Naive thymus-derived CD4-positive, alpha-beta T cell (primary cell): ENCODE measurements at regions of chr1 and their contacts with region 1.

Region 1: GRCh38 chr1:198699167-198700015 is 60.6 kb downstream of the PTPRC start:
- DNase-seq: peak; percentile 34 to 68 (median 64)
- ATAC-seq: peak; percentile 84
- H3K4me3 ChIP-seq: no peak overlapping the region
- H3K4me3 Mint-ChIP-seq: peak overlapping the region; percentile 13 to 68 (median 40)
- H3K27ac ChIP-seq: peak overlapping the region; percentile 46
- H3K27ac Mint-ChIP-seq: peak overlapping the region; percentile 50 to 93 (median 87)
- H3K4me1 ChIP-seq: peaks cover 42 to 52% of the 10 kb centered on the region in 2 donors
- H3K4me1 Mint-ChIP-seq: peaks cover 46 to 97% (median 88%) of the 10 kb centered on the region in 7 donors
- H3K27me3 ChIP-seq: no peaks in the 10 kb centered on the region
- H3K27me3 Mint-ChIP-seq: no peaks in the 10 kb centered on the region

Region 2: GRCh38 chr1:197521118-197521739 is 1178.2 kb before region 1 on chr1:
- CTCF ChIA-PET with region 1: no interaction called
- POLR2A ChIA-PET with region 1: no interaction called
- intact Hi-C with region 1: loop called in 1 of 2 experiments (anchors 10 kb)
- DNase-seq: peak in 7 of 9 donors; percentile 2 to 34 (median 24)
- ATAC-seq: no peak
- H3K4me3 ChIP-seq: no peak overlapping the region
- H3K4me3 Mint-ChIP-seq: no peak overlapping the region
- H3K27ac ChIP-seq: no peak overlapping the region
- H3K27ac Mint-ChIP-seq: no peak overlapping the region
- H3K4me1 ChIP-seq: no peaks in the 10 kb centered on the region
- H3K4me1 Mint-ChIP-seq: peaks cover 0 to 5% (median 0%) of the 10 kb centered on the region in 7 donors
- H3K27me3 ChIP-seq: no peaks in the 10 kb centered on the region
- H3K27me3 Mint-ChIP-seq: no peaks in the 10 kb centered on the region

Region 3: GRCh38 chr1:198500096-198500495 is 199.3 kb before region 1 on chr1:
- CTCF ChIA-PET with region 1: no interaction called
- POLR2A ChIA-PET with region 1: no interaction called
- intact Hi-C with region 1: no loop called
- DNase-seq: no peak
- ATAC-seq: no peak
- H3K4me3 ChIP-seq: no peak overlapping the region
- H3K4me3 Mint-ChIP-seq: no peak overlapping the region
- H3K27ac ChIP-seq: no peak overlapping the region
- H3K27ac Mint-ChIP-seq: peak overlapping the region in 2 of 9 donors; percentile 1 to 13
- H3K4me1 ChIP-seq: no peaks in the 10 kb centered on the region
- H3K4me1 Mint-ChIP-seq: peaks cover 0 to 10% (median 4%) of the 10 kb centered on the region in 7 donors
- H3K27me3 ChIP-seq: no peaks in the 10 kb centered on the region
- H3K27me3 Mint-ChIP-seq: no peaks in the 10 kb centered on the region

Region 4: DNA sequence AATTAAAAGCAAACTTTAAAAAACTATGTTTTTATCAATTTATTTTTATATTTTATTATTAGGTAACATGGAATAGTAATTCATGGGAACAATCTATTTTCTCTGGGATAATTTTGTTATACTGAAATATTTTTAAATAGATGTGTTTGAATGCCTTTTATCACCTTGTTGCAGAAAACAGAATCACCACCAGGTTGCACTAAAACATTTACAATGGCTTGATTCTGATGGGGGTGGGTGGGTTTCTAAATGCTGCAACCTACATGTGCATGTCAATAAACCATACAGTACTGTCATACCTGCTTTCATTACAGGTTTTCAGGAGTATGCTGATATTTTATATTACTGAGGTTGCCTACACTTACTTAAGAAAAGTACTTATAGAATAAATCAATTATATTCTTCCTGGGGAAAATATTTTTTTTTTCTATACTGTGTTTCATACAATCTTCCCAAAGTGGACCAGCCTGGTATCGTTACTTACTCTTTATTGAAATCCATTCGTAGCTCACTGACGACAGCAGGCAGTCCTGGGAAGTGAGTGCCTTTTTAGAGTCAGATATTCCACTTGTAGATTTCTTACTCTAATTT is 72.3 kb after region 1 on chr1:
- CTCF ChIA-PET with region 1: no interaction called
- POLR2A ChIA-PET with region 1: no interaction called
- intact Hi-C with region 1: no loop called
- DNase-seq: no peak
- ATAC-seq: peak; percentile 40
- H3K4me3 ChIP-seq: no peak overlapping the region
- H3K4me3 Mint-ChIP-seq: no peak overlapping the region
- H3K27ac ChIP-seq: no peak overlapping the region
- H3K27ac Mint-ChIP-seq: no peak overlapping the region
- H3K4me1 ChIP-seq: no peaks in the 10 kb centered on the region
- H3K4me1 Mint-ChIP-seq: peaks cover 0 to 12% (median 3%) of the 10 kb centered on the region in 7 donors
- H3K27me3 ChIP-seq: no peaks in the 10 kb centered on the region
- H3K27me3 Mint-ChIP-seq: peaks cover 0 to 3% (median 0%) of the 10 kb centered on the region in 5 donors

Region 5: DNA sequence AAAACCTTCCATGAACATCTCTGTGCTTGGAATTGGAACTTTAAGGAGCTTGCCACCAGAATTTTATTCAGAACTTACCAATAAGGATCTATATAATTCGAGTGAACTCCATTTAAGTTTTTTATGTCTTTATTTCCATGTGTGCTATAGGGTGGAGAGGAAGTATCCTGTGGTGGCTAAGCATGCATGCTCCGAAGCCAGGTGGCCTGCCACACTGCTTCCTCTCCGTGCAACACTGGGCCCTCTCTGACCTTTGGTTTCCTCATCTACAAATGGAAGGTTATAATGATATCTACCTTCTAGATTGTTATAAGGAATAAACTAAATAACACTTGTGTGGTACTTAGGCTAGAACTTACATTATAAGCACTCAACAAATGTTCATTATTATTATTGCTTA is 321.5 kb after region 1 on chr1:
- CTCF ChIA-PET with region 1: no interaction called
- POLR2A ChIA-PET with region 1: no interaction called
- intact Hi-C with region 1: no loop called
- DNase-seq: no peak
- ATAC-seq: no peak
- H3K4me3 ChIP-seq: no peak overlapping the region
- H3K4me3 Mint-ChIP-seq: peak overlapping the region in 2 of 10 donors; percentile 5 to 32
- H3K27ac ChIP-seq: no peak overlapping the region
- H3K27ac Mint-ChIP-seq: no peak overlapping the region
- H3K4me1 ChIP-seq: no peaks in the 10 kb centered on the region
- H3K4me1 Mint-ChIP-seq: peaks cover 0 to 19% (median 2%) of the 10 kb centered on the region in 7 donors
- H3K27me3 ChIP-seq: no peaks in the 10 kb centered on the region
- H3K27me3 Mint-ChIP-seq: no peaks in the 10 kb centered on the region